Tibial artery (tissue), 4 donors: ENCODE measurements at regions of chr11 and their contacts with region 1.

Region 1: DNA sequence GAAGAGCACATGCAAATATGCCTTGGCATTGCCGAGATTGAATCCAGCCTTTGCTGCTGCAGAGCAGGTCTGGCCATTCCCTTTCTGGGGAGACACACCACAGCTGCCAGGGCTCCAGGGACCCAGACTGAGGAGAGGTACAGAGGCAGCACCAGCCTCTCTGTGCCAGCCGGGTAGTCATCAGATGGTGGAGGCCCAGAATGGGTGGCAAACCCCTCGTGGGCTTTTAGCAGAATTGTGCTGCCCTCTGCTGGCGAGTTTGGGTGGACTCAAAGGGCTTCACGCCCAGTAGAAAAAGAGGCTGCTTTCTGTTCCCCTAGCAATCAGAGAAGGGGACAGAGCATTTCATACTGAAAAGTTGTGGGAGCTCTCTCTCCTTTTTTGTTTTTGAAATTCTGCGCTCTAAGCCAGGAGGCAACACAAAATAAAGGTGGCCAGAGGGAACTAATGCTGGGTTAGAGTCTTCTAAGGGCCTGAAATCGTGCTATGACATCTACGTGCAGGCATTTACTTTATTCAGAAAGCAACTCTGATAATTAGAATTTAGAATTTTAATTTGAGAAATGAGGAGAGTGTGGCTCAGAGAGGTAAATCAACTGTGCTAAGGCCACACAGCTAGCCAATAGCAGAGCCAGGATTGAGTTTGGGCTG is 158.8 kb upstream of the NAV2 start:
- DNase-seq: peak; percentile 80 to 88
- H3K4me3 ChIP-seq: no peak overlapping the region
- H3K27ac ChIP-seq: no peak overlapping the region
- H3K4me1 ChIP-seq: peaks cover 0 to 10% (median 5%) of the 10 kb centered on the region in 4 donors
- H3K27me3 ChIP-seq: peaks cover 0 to 5% of the 10 kb centered on the region in 2 donors
- CTCF ChIP-seq: peak; percentile 81 to 90

Region 2: GRCh38 chr11:19071255-19071654 is 482.6 kb before region 1 on chr11:
- intact Hi-C with region 1: loop called (anchors 5 kb)
- DNase-seq: peak in 1 of 2 donors; percentile 52
- H3K4me3 ChIP-seq: no peak overlapping the region
- H3K27ac ChIP-seq: no peak overlapping the region
- H3K4me1 ChIP-seq: no peaks in the 10 kb centered on the region
- H3K27me3 ChIP-seq: peaks cover 0 to 11% of the 10 kb centered on the region in 2 donors
- CTCF ChIP-seq: peak; percentile 75 to 77

Region 3: DNA sequence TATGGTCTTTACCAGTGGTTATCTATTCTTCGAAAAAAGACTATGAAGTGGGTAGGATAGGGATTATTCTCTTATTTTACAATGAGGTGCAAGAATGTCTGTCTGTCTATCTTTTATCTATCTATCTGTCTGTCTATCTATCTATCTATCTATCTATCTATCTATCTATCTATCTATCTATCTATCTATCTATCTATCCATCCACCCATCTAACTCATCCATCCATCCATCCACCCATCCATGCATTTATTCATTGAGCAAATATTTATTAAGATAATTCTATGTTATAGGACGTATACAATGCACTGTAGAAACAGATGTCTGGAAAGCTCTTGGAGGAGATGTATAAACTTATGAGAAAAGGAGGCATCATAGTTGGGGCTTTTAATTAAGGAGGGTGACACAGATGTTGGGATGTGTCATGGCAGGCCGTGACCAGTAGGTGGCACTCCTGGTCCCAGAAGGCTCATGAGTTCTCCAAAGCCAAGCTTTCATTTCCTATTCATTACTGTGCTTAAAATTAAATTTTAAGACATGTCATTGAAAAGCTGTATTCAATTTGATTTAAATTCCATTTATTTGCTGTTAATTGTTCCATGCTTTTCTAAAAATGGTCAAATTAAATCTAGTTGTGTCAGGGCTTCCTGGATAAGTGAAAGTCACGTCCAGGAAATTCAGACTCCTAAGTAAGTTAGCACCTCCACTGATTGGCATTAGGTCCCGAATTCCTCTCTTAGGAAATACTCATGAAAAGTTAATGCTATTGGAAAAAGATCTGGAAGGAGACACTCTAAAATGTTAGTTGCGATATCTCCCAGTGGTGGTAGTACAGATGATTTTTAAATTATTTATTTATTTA is 294.1 kb before region 1 on chr11:
- intact Hi-C with region 1: loop called (anchors 5 kb)
- DNase-seq: peak; percentile 73 to 75
- H3K4me3 ChIP-seq: peak overlapping the region in 1 of 2 donors; percentile 13
- H3K27ac ChIP-seq: no peak overlapping the region
- H3K4me1 ChIP-seq: no peaks in the 10 kb centered on the region
- H3K27me3 ChIP-seq: peaks cover 0 to 5% of the 10 kb centered on the region in 2 donors
- CTCF ChIP-seq: peak; percentile 77 to 96

Region 4: GRCh38 chr11:19275481-19275880 is 278.3 kb before region 1 on chr11:
- intact Hi-C with region 1: no loop called
- DNase-seq: no peak
- H3K4me3 ChIP-seq: no peak overlapping the region
- H3K27ac ChIP-seq: no peak overlapping the region
- H3K4me1 ChIP-seq: no peaks in the 10 kb centered on the region
- H3K27me3 ChIP-seq: no peaks in the 10 kb centered on the region
- CTCF ChIP-seq: no peak

Region 5: GRCh38 chr11:19311308-19312030 is 242.3 kb before region 1 on chr11:
- intact Hi-C with region 1: loop called (anchors 2 kb)
- DNase-seq: peak in 1 of 2 donors; percentile 75
- H3K4me3 ChIP-seq: no peak overlapping the region
- H3K27ac ChIP-seq: no peak overlapping the region
- H3K4me1 ChIP-seq: peaks cover 0 to 3% (median 2%) of the 10 kb centered on the region in 4 donors
- H3K27me3 ChIP-seq: peaks cover 0 to 8% of the 10 kb centered on the region in 2 donors
- CTCF ChIP-seq: peak; percentile 82 to 87

Region 6: GRCh38 chr11:19735157-19735908 is 181.5 kb after region 1 on chr11:
- intact Hi-C with region 1: loop called (anchors 2 kb)
- DNase-seq: no peak
- H3K4me3 ChIP-seq: no peak overlapping the region
- H3K27ac ChIP-seq: peak overlapping the region; percentile 77 to 98
- H3K4me1 ChIP-seq: peaks cover 4 to 100% (median 65%) of the 10 kb centered on the region in 4 donors
- H3K27me3 ChIP-seq: no peaks in the 10 kb centered on the region
- CTCF ChIP-seq: peak; percentile 42 to 44

Region 7: GRCh38 chr11:20013346-20014066 is 459.7 kb after region 1 on chr11:
- intact Hi-C with region 1: no loop called
- DNase-seq: no peak
- H3K4me3 ChIP-seq: no peak overlapping the region
- H3K27ac ChIP-seq: no peak overlapping the region
- H3K4me1 ChIP-seq: peaks cover 0 to 29% (median 8%) of the 10 kb centered on the region in 4 donors
- H3K27me3 ChIP-seq: no peaks in the 10 kb centered on the region
- CTCF ChIP-seq: no peak